ENCODE measurements at regions of chr5 and their contacts with region 1.

Region 1: GRCh38 chr5:40518511-40518967 is 161.2 kb upstream of the PTGER4 start:
- DNase-seq: peak; percentile 41
- H3K4me3 Mint-ChIP-seq: no peak overlapping the region
- H3K27ac Mint-ChIP-seq: no peak overlapping the region
- H3K4me1 Mint-ChIP-seq: peaks cover 29% of the 10 kb centered on the region
- H3K27me3 Mint-ChIP-seq: no peaks in the 10 kb centered on the region

Region 2: GRCh38 chr5:39714036-39714698 is 804.4 kb before region 1 on chr5:
- CTCF ChIA-PET with region 1: no interaction called
- POLR2A ChIA-PET with region 1: no interaction called
- intact Hi-C with region 1: loop called (anchors 10 kb)
- DNase-seq: peak; percentile 29
- H3K4me3 Mint-ChIP-seq: no peak overlapping the region
- H3K27ac Mint-ChIP-seq: no peak overlapping the region
- H3K4me1 Mint-ChIP-seq: no peaks in the 10 kb centered on the region
- H3K27me3 Mint-ChIP-seq: no peaks in the 10 kb centered on the region

Region 3: DNA sequence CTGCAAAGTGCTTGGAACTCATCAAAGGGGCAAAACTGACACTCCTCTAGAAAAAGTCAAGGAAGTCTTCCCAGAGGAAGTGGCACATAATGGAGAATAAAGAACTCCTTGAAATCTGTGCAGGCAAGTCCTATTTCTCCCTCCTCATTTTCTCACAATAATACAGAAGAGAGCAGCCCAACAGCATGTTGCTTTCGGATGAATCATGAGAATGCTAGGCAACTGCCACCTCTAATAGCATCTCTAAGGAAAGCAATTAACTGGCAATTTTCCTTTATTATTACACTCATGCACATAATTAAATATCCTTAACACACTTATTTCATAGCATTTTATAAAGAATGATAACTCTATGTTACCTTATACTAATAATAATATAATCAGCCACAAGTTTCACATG is 39.0 kb after region 1 on chr5:
- CTCF ChIA-PET with region 1: no interaction called
- POLR2A ChIA-PET with region 1: no interaction called
- intact Hi-C with region 1: loop called (anchors 5 kb)
- DNase-seq: no peak
- H3K4me3 Mint-ChIP-seq: no peak overlapping the region
- H3K27ac Mint-ChIP-seq: no peak overlapping the region
- H3K4me1 Mint-ChIP-seq: peaks cover 20% of the 10 kb centered on the region
- H3K27me3 Mint-ChIP-seq: no peaks in the 10 kb centered on the region

Region 4: DNA sequence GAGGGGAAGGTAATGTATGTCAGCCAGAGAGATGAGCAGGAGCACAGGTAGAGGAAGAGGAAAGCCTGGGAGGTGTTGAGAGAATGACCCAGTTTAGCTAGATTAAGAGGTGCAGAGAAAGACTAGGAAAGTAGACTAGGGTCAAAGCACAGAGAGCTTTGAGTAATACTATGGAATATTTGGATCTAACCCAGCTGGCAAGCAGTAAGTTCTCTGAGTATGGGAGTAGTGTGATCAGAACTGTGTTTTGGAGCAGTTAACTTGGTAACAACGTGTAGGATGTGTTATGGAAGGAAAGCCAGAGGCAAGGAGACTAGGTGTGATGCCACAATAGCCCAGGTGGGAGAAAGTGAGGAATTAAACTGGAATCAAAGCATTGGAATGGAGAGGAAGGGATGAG is 76.3 kb after region 1 on chr5:
- CTCF ChIA-PET with region 1: no interaction called
- POLR2A ChIA-PET with region 1: no interaction called
- intact Hi-C with region 1: no loop called
- DNase-seq: no peak
- H3K4me3 Mint-ChIP-seq: no peak overlapping the region
- H3K27ac Mint-ChIP-seq: no peak overlapping the region
- H3K4me1 Mint-ChIP-seq: peaks cover 31% of the 10 kb centered on the region
- H3K27me3 Mint-ChIP-seq: no peaks in the 10 kb centered on the region

Region 5: DNA sequence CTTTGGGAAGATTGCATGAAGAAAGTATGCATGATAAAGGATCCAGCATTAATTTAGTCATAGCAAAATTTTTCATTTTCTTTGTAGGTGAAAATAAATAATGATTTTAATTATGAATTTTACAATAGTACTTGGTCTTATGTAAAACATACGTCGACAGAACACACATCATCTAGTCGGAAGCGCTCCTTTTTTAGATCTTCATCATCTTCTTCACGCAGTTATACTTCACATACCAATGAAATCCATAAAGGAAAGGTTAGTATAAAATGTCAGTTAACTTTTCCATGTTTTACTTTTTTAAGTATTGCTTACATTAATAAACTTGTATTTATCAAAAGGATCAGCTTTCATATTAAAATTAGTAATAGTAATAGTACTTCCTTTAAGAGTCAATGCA is 426.6 kb after region 1 on chr5:
- CTCF ChIA-PET with region 1: no interaction called
- POLR2A ChIA-PET with region 1: no interaction called
- intact Hi-C with region 1: no loop called
- DNase-seq: no peak
- H3K4me3 Mint-ChIP-seq: no peak overlapping the region
- H3K27ac Mint-ChIP-seq: no peak overlapping the region
- H3K4me1 Mint-ChIP-seq: no peaks in the 10 kb centered on the region
- H3K27me3 Mint-ChIP-seq: peaks cover 4% of the 10 kb centered on the region

Measured in activated CD4-positive, alpha-beta memory T cell treated with anti-CD3 and anti-CD28 coated beads for 36 hours (primary cell).